Naive thymus-derived CD4-positive, alpha-beta T cell (primary cell): ENCODE measurements at regions of chr4 and their contacts with region 1.

Region 1: GRCh38 chr4:42568610-42569207 is 88.2 kb downstream of the ATP8A1 start:
- DNase-seq: peak in 8 of 9 donors; percentile 31 to 69 (median 62)
- ATAC-seq: peak; percentile 91
- H3K4me3 ChIP-seq: no peak overlapping the region
- H3K4me3 Mint-ChIP-seq: no peak overlapping the region
- H3K27ac ChIP-seq: no peak overlapping the region
- H3K27ac Mint-ChIP-seq: peak overlapping the region in 4 of 9 donors; percentile 11 to 84 (median 57)
- H3K4me1 ChIP-seq: no peaks in the 10 kb centered on the region
- H3K4me1 Mint-ChIP-seq: peaks cover 0 to 4% (median 0%) of the 10 kb centered on the region in 7 donors
- H3K27me3 ChIP-seq: no peaks in the 10 kb centered on the region
- H3K27me3 Mint-ChIP-seq: no peaks in the 10 kb centered on the region

Region 2: GRCh38 chr4:42391981-42392380 is 176.7 kb before region 1 on chr4:
- CTCF ChIA-PET with region 1: no interaction called
- POLR2A ChIA-PET with region 1: no interaction called
- intact Hi-C with region 1: no loop called
- DNase-seq: no peak
- ATAC-seq: no peak
- H3K4me3 ChIP-seq: no peak overlapping the region
- H3K4me3 Mint-ChIP-seq: no peak overlapping the region
- H3K27ac ChIP-seq: no peak overlapping the region
- H3K27ac Mint-ChIP-seq: no peak overlapping the region
- H3K4me1 ChIP-seq: no peaks in the 10 kb centered on the region
- H3K4me1 Mint-ChIP-seq: peaks cover 0 to 10% (median 9%) of the 10 kb centered on the region in 7 donors
- H3K27me3 ChIP-seq: peaks cover 3% of the 10 kb centered on the region in 2 donors
- H3K27me3 Mint-ChIP-seq: peaks cover 15 to 35% (median 20%) of the 10 kb centered on the region in 5 donors

Region 3: DNA sequence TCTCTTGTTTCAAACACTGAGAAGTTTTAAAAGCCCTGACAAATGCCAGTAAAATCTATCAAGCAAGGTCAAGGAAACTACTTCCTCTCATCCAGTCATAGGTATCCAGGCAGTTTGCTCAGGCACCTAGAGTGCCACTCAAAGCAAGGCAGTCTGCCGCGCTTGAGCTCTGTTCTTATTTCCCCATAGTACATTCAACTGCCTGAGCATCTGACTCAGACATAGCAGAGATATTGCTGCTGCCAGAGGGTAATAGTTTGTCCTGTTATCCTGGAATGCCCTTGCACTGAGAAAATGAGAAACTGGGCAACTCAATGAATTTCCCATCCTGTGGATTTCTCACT is 104.3 kb after region 1 on chr4:
- CTCF ChIA-PET with region 1: no interaction called
- POLR2A ChIA-PET with region 1: no interaction called
- intact Hi-C with region 1: loop called in 1 of 2 experiments (anchors 1 kb)
- DNase-seq: peak in 2 of 9 donors; percentile 8 to 17
- ATAC-seq: no peak
- H3K4me3 ChIP-seq: no peak overlapping the region
- H3K4me3 Mint-ChIP-seq: peak overlapping the region in 9 of 10 donors; percentile 5 to 76 (median 58)
- H3K27ac ChIP-seq: no peak overlapping the region
- H3K27ac Mint-ChIP-seq: peak overlapping the region; percentile 56 to 97 (median 78)
- H3K4me1 ChIP-seq: peaks cover 23 to 28% of the 10 kb centered on the region in 2 donors
- H3K4me1 Mint-ChIP-seq: peaks cover 25 to 60% (median 41%) of the 10 kb centered on the region in 7 donors
- H3K27me3 ChIP-seq: no peaks in the 10 kb centered on the region
- H3K27me3 Mint-ChIP-seq: no peaks in the 10 kb centered on the region

Region 4: DNA sequence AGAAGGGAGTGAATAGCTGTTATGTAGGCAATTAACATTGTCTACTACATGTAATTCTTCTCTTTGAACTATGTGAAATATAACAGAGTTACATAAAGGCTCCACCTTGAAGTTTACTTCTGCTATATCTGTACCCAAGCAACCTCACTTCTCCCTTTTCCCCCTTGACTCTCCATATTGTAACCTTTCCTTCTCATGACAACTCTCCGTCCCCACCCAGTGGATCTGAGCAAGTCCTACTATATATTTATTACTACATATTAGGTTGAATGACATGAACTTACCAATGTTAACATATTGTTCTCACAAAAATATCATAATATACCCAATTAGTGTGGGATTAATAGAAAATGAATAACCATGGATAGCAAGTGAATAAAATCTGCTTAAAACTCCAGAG is 181.4 kb after region 1 on chr4:
- CTCF ChIA-PET with region 1: interaction called, 29 read pairs
- POLR2A ChIA-PET with region 1: no interaction called
- intact Hi-C with region 1: loop called (anchors 1 kb)
- DNase-seq: peak in 7 of 9 donors; percentile 15 to 59 (median 39)
- ATAC-seq: peak; percentile 88
- H3K4me3 ChIP-seq: no peak overlapping the region
- H3K4me3 Mint-ChIP-seq: no peak overlapping the region
- H3K27ac ChIP-seq: no peak overlapping the region
- H3K27ac Mint-ChIP-seq: no peak overlapping the region
- H3K4me1 ChIP-seq: no peaks in the 10 kb centered on the region
- H3K4me1 Mint-ChIP-seq: peaks cover 0 to 4% (median 0%) of the 10 kb centered on the region in 7 donors
- H3K27me3 ChIP-seq: no peaks in the 10 kb centered on the region
- H3K27me3 Mint-ChIP-seq: no peaks in the 10 kb centered on the region

Region 5: DNA sequence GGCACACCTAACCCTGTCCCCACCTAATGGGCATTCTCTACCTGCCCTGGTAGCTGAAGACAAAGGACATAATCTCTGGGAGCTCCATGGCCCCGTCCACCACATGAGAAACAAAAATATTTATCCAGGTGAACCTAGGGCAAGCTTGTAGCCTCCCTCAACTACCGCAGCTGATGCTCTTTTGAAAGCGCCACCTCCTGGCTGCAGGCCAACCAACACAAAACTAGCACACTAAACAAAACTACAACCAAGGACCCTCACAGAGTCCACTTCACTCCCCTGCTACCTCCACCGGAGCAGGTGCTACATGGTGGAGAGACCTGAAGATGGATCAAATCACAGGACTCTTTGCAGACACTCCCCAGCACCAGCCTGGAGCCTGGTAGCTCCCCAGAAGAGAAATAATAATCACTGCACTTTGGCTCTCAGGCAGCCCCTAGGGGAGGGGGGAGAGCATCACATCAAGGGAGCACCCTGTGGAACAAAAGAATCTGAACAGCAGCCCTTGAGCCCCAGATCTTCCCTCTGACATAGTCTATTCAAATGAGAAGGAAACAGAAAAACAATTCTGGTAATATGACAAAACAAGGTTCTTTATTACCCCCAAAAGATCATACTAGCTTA is 199.5 kb after region 1 on chr4:
- CTCF ChIA-PET with region 1: interaction called, 5 read pairs
- POLR2A ChIA-PET with region 1: no interaction called
- intact Hi-C with region 1: loop called (anchors 1 to 2 kb)
- DNase-seq: peak in 2 of 9 donors; percentile 4
- ATAC-seq: no peak
- H3K4me3 ChIP-seq: no peak overlapping the region
- H3K4me3 Mint-ChIP-seq: no peak overlapping the region
- H3K27ac ChIP-seq: no peak overlapping the region
- H3K27ac Mint-ChIP-seq: no peak overlapping the region
- H3K4me1 ChIP-seq: no peaks in the 10 kb centered on the region
- H3K4me1 Mint-ChIP-seq: no peaks in the 10 kb centered on the region
- H3K27me3 ChIP-seq: no peaks in the 10 kb centered on the region
- H3K27me3 Mint-ChIP-seq: peaks cover 0 to 22% (median 6%) of the 10 kb centered on the region in 5 donors

Region 6: GRCh38 chr4:42816880-42817400 is 248.2 kb after region 1 on chr4:
- CTCF ChIA-PET with region 1: interaction called, 5 read pairs
- POLR2A ChIA-PET with region 1: no interaction called
- intact Hi-C with region 1: loop called in 1 of 2 experiments (anchors 1 kb)
- DNase-seq: no peak
- ATAC-seq: no peak
- H3K4me3 ChIP-seq: no peak overlapping the region
- H3K4me3 Mint-ChIP-seq: no peak overlapping the region
- H3K27ac ChIP-seq: no peak overlapping the region
- H3K27ac Mint-ChIP-seq: no peak overlapping the region
- H3K4me1 ChIP-seq: no peaks in the 10 kb centered on the region
- H3K4me1 Mint-ChIP-seq: no peaks in the 10 kb centered on the region
- H3K27me3 ChIP-seq: no peaks in the 10 kb centered on the region
- H3K27me3 Mint-ChIP-seq: peaks cover 0 to 5% (median 0%) of the 10 kb centered on the region in 5 donors

Region 7: GRCh38 chr4:42865572-42866189 is 297.0 kb after region 1 on chr4:
- CTCF ChIA-PET with region 1: interaction called, 18 read pairs
- POLR2A ChIA-PET with region 1: no interaction called
- intact Hi-C with region 1: loop called (anchors 1 kb)
- DNase-seq: peak in 8 of 9 donors; percentile 14 to 58 (median 46)
- ATAC-seq: peak; percentile 51
- H3K4me3 ChIP-seq: no peak overlapping the region
- H3K4me3 Mint-ChIP-seq: no peak overlapping the region
- H3K27ac ChIP-seq: no peak overlapping the region
- H3K27ac Mint-ChIP-seq: no peak overlapping the region
- H3K4me1 ChIP-seq: no peaks in the 10 kb centered on the region
- H3K4me1 Mint-ChIP-seq: no peaks in the 10 kb centered on the region
- H3K27me3 ChIP-seq: no peaks in the 10 kb centered on the region
- H3K27me3 Mint-ChIP-seq: peaks cover 19 to 37% (median 28%) of the 10 kb centered on the region in 5 donors